ENCODE measurements at regions of chr13 and their contacts with region 1.

Region 1: GRCh38 chr13:101955764-101956163 is 446.1 kb downstream of the FGF14 start:
- DNase-seq: no peak
- H3K4me3 ChIP-seq: no peak overlapping the region
- CTCF ChIP-seq: no peak

Region 2: GRCh38 chr13:102035969-102036368 is 80.2 kb after region 1 on chr13:
- in situ Hi-C with region 1: no loop called
- DNase-seq: no peak
- H3K4me3 ChIP-seq: no peak overlapping the region
- CTCF ChIP-seq: no peak

Region 3: GRCh38 chr13:102347490-102347889 is 391.7 kb after region 1 on chr13:
- in situ Hi-C with region 1: no loop called
- DNase-seq: no peak
- H3K4me3 ChIP-seq: no peak overlapping the region
- CTCF ChIP-seq: no peak

Region 4: DNA sequence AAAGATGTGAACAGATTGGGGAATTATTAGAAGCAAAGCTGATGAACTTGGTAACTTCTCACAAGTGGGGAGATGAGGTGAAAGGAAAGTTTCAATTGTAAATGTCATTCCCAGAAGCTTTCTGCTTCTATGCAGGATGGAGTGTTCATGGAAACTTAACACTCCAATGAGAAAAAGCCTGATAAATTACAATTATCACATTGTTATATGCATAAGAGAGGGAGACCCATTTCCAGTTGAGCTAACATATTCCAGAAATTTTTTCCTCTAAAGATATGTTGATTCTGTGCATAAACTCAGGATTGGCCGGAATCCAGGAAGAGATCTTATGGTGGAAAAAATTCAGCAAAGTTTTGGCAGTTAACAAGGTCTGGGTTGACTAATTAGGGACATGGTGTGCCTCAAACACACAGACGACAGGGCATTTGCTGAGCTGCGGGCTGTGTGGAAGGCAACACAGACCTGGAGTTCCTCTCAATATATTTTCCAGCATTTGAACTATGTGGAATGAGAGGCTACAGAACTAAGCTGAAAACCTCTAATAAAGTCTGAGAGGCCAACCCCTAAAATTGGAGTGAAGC is 510.9 kb after region 1 on chr13:
- in situ Hi-C with region 1: loop called (anchors 25 kb)
- DNase-seq: no peak
- H3K4me3 ChIP-seq: no peak overlapping the region
- CTCF ChIP-seq: no peak